ENCODE measurements at regions of chr6 and their contacts with region 1.

Region 1: DNA sequence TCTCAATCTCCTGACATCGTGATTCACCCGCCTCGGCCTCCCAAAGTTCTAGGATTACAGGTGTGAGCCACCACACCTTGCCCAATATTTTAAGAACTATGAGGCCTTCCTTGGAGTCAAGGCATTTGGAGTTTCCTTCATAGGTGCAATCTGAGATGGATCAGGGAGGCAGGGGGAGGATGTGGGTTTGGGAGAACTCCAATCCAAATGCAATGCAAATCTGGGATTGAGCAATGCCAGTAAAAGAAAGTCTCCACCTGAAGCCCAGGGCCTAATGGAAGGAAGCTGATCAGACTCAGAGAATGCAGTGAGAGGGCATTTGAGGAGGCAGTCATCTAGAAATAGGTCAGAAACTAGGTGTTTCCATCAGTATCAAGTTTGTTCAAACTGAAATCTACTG is 21.2 kb downstream of the RSPH3 start:
- DNase-seq: no peak
- ATAC-seq: no peak
- H3K4me3 ChIP-seq: no peak overlapping the region
- H3K27ac ChIP-seq: no peak overlapping the region
- H3K4me1 ChIP-seq: no peaks in the 10 kb centered on the region
- H3K27me3 ChIP-seq: no peaks in the 10 kb centered on the region
- CTCF ChIP-seq: no peak

Region 2: GRCh38 chr6:158711264-158711663 is 267.5 kb before region 1 on chr6:
- intact Hi-C with region 1: loop called in 2 of 3 experiments (anchors 5 to 10 kb)
- DNase-seq: no peak
- ATAC-seq: no peak
- H3K4me3 ChIP-seq: no peak overlapping the region
- H3K27ac ChIP-seq: no peak overlapping the region
- H3K4me1 ChIP-seq: peaks cover 15 to 18% (median 17%) of the 10 kb centered on the region in 3 donors
- H3K27me3 ChIP-seq: no peaks in the 10 kb centered on the region
- CTCF ChIP-seq: no peak

Region 3: DNA sequence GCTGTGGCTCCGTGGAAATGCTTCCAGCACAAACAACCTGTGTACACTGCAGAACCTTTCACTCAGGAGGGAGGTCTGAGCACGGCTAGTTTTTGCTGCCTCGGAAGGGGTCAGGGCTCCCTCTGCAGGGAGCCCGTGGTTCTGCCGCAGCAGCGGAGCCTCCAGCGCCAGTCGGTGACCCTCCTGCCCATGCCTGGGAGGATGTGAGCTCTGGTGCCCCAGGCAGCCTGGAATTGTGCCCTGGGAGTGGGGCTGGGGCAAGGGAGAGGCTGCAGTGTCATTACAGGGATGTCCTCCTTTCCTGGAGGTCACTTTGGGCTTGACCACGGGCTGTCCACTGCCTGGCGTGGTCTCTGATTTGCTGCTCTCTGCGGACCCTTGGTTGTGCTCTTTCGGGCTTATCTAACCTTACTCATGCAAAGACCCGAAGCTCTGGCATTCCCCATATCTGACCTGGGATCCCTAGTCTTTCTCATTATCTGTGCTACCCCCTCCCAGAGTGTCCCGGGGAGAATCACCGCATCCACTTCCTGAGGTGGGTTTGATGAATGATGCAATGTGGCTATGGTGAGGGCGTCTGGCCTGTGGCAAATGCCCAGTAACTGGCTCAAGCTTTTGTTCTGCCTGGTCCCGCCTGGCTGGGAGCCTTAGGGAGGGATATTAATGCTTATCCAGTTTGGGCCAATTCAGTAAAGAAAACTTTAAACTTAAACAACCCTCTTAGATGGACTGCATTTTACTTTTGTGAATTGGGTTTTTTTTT is 125.6 kb after region 1 on chr6:
- intact Hi-C with region 1: no loop called
- DNase-seq: peak; percentile 51 to 85 (median 66)
- ATAC-seq: peak; percentile 78 to 93 (median 92)
- H3K4me3 ChIP-seq: no peak overlapping the region
- H3K27ac ChIP-seq: no peak overlapping the region
- H3K4me1 ChIP-seq: no peaks in the 10 kb centered on the region
- H3K27me3 ChIP-seq: peaks cover 0 to 5% (median 0%) of the 10 kb centered on the region in 4 donors
- CTCF ChIP-seq: peak; percentile 66 to 90 (median 84)